ENCODE measurements at regions of chr19 and their contacts with region 1.

Region 1: DNA sequence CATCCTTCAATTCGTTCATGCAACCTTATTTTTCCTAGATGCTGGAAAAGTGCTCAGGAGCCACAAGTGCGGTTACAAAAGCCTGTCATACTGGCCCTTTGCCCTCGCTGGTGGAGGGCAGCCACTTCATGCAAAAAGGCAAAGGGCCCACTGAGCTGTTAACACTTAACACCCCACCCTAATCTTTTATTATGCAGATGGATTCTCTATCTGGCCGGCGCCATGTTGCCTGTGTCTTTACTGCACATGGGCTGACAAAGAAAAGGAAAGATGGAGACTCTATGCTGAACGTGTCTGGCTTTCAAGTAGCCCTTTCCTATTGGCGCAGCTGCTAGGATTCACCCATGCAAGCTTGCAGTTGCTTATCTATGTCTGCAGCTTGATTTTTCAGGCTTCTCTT is 10.8 kb downstream of the OR7D2 start:
- DNase-seq: no peak
- H3K4me3 ChIP-seq: no peak overlapping the region
- CTCF ChIP-seq: no peak

Region 2: GRCh38 chr19:9205501-9206113 is 16.1 kb after region 1 on chr19:
- CTCF ChIA-PET with region 1: interaction called, 14 read pairs
- POLR2A ChIA-PET with region 1: no interaction called
- DNase-seq: no peak
- H3K4me3 ChIP-seq: peak overlapping the region; percentile 40
- CTCF ChIP-seq: peak; percentile 83

Region 3: DNA sequence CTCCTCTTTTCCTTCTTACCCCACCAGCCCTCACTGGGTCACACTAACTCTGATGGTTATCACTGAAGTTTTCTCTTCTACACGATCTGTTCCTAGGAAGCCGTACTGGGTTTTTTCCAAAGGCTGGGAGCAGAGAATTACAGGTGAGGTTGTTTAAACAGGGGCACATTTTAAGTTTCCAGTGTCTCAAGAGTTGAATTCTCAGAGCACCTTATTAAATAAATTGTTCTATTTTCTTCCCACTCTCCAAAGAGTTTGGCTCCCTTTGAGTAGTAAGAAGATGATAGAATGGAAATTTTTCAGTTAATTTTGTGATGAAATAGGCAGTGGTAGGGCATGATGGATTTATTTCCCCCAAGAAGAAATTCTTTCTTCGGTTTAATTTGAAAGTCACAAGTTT is 30.0 kb after region 1 on chr19 and contains the start of gene OR7D4:
- CTCF ChIA-PET with region 1: no interaction called
- POLR2A ChIA-PET with region 1: no interaction called
- DNase-seq: no peak
- H3K4me3 ChIP-seq: no peak within 1 kb of the TSS
- CTCF ChIP-seq: no peak